ENCODE measurements at regions of chr2 and their contacts with region 1.

Region 1: DNA sequence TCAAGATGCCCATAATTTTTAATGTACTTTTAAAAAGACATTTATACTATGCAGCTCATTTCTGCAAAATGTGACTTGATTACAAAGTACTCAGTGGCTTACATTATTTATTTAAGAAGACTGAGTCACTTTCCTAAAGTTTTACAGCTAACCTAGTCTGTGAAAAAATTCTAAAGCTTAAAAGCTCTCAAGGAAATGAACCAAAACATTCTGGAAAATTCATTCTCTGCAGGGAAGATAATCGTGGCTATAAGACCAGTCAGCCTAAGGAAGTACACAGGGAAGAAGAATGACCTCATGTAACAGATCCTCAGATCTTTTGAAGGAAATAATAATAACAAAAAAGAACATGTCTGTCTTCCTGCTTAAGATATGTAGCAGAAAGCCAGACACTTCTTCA is 232.1 kb upstream of the STK17B start:
- DNase-seq: no peak
- CTCF ChIP-seq: no peak

Region 2: GRCh38 chr2:196337208-196337953 is 66.1 kb before region 1 on chr2:
- CTCF ChIA-PET with region 1: interaction called, 20 read pairs
- POLR2A ChIA-PET with region 1: no interaction called
- DNase-seq: no peak
- CTCF ChIP-seq: no peak

Region 3: GRCh38 chr2:196384729-196385128 is 18.7 kb before region 1 on chr2:
- CTCF ChIA-PET with region 1: interaction called, 20 read pairs
- POLR2A ChIA-PET with region 1: interaction called, 6 read pairs
- DNase-seq: no peak
- CTCF ChIP-seq: no peak

Region 4: GRCh38 chr2:196390243-196391148 is 13.0 kb before region 1 on chr2:
- CTCF ChIA-PET with region 1: interaction called, 20 read pairs
- POLR2A ChIA-PET with region 1: interaction called, 3 read pairs
- DNase-seq: no peak
- CTCF ChIP-seq: no peak

Region 5: DNA sequence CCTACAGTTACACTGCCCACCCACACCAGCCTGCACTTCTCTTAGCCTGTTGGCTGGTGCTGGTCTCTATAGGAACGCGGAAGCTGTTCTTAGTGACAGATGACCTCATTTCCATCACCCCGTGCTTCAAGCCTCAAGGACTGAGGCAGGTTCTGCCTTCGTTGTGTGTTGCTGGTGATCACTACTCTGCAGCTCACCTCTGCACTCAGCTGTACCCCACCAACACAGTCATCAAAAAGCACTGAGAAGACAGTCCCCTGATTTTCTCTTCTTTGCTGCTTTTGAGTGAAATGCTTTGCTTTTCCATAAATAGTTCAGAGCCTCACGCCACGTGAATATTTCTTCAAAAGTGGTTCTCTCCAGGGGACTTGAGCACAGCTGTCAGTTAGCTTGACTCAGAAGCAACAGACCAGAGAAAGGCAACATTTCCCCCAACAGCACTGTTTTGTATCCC is 10.4 kb after region 1 on chr2:
- CTCF ChIA-PET with region 1: interaction called, 29 read pairs
- POLR2A ChIA-PET with region 1: interaction called, 6 read pairs
- DNase-seq: peak; percentile 69
- CTCF ChIP-seq: no peak